Activated CD8-positive, alpha-beta memory T cell treated with anti-CD3 and anti-CD28 coated beads, Interleukin-2, amount 10 ng/mL, durations not matched to agents 7 days and 5 days (primary cell): ENCODE measurements at regions of chr10 and their contacts with region 1.

Region 1: DNA sequence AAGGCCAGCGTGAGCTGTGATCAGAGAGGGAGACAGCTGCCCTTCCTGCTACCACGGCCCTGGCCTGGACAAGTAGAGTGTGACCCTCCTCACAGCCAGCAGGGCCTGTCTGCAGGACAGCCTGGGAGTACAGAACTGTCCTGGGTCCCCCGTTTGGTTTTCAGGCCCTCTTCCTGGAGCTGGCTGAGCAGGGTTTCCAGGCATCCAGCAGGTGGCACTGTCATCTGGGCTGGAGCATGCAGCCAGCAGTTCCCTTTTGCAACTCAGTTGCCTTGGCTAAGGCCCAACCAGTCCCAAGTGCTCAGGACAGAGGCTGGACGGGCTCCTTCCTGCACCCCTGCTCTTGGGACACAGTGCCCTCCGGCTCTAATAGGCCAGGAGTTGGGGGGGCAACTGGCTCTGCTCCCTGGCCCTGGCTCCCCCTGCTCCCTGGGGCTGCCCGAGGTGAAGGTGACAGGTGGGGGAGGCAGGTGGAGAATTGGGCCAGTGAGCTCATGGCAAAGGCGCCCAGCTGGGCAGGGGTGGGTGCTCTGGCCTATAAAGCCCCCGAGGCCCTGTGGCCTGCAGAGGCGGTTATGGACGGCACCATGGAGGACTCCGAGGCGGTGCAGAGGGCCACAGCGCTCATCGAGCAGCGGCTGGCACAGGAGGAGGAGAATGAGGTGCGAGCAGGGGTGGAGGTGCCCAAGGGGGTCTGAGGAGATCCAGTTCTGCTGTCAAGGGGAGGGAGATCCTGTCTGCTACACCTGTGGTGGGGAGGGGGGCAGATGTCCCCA is at the start of gene ANKRD2:
- DNase-seq: peak; percentile 80
- ATAC-seq: peak; percentile 90
- H3K4me3 Mint-ChIP-seq: no peak within 1 kb of the TSS
- H3K27ac Mint-ChIP-seq: no peak within 1 kb of the TSS
- H3K4me1 Mint-ChIP-seq: peaks cover 2% of the 10 kb centered on the region
- H3K27me3 Mint-ChIP-seq: peaks cover 3% of the 10 kb centered on the region
- total RNA-seq, gene ANKRD2: 0.26 to 0.67 TPM

Region 2: DNA sequence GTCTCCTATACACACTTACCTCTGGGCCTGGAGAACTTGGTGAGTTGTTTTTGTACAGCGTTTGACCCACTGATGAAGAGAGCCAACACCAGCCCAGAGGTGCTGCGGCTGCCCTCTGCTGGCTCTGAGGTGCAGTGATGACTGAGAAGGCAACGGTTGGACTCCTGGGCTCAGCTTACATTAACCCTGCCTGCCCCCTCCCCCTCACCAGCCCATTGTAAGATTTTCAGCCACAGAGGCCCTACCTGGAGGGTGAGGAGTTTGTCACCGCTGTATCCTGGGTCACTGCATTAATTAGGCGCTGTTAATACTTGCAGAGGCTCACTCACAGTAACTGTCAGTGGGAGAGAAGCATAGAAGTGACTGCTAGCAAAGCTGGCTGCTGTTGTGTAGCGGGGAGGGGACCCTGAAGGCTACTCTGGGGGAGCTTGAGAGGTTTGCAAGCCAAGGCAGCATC is 18.8 kb before region 1 on chr10:
- CTCF ChIA-PET with region 1: interaction called, 11 read pairs
- DNase-seq: peak; percentile 66
- ATAC-seq: peak; percentile 98
- H3K4me3 Mint-ChIP-seq: no peak overlapping the region
- H3K27ac Mint-ChIP-seq: no peak overlapping the region
- H3K4me1 Mint-ChIP-seq: peaks cover 1% of the 10 kb centered on the region
- H3K27me3 Mint-ChIP-seq: peaks cover 3% of the 10 kb centered on the region

Region 3: DNA sequence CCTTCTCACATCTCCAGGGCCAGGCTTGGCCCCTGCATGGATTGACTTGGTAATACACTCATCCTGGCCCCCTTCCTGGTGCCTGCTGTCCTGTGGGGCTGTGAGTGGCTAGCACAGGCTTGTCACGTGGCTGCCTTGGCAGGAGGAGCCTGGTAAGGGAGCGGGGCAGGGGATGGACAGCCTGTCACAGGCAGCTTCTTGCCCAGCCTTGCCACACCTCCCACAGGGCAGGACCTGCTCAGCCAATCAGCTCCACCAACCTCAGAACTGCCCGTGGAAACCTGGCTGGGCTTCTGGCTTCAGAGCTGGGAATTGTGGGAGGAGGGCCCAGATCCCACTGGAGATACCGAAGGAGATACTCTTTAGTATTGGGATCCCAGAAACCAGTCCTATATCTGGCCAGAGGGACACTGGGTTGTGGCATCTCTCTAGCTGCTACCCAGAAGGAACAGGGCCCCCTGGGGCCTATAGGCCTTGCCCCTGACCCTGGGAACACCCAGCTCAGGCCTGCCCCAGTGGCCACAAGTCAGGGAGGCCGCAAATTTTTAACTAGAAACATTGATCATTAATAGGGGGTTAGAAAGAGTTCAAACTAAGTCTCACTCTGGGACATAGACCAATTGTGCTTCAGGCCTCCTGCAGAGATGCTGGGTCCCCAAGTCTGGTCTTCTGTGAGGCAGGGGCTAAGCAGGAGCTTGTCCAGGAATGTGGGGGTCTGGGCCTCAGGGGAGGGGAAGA is 11.8 kb after region 1 on chr10 and contains the start of gene HOGA1:
- CTCF ChIA-PET with region 1: interaction called, 21 read pairs
- DNase-seq: no peak
- ATAC-seq: no peak
- H3K4me3 Mint-ChIP-seq: no peak within 1 kb of the TSS
- H3K27ac Mint-ChIP-seq: no peak within 1 kb of the TSS
- H3K4me1 Mint-ChIP-seq: peaks cover 4% of the 10 kb centered on the region
- H3K27me3 Mint-ChIP-seq: peaks cover 6% of the 10 kb centered on the region
- total RNA-seq, gene HOGA1: not detected

Region 4: DNA sequence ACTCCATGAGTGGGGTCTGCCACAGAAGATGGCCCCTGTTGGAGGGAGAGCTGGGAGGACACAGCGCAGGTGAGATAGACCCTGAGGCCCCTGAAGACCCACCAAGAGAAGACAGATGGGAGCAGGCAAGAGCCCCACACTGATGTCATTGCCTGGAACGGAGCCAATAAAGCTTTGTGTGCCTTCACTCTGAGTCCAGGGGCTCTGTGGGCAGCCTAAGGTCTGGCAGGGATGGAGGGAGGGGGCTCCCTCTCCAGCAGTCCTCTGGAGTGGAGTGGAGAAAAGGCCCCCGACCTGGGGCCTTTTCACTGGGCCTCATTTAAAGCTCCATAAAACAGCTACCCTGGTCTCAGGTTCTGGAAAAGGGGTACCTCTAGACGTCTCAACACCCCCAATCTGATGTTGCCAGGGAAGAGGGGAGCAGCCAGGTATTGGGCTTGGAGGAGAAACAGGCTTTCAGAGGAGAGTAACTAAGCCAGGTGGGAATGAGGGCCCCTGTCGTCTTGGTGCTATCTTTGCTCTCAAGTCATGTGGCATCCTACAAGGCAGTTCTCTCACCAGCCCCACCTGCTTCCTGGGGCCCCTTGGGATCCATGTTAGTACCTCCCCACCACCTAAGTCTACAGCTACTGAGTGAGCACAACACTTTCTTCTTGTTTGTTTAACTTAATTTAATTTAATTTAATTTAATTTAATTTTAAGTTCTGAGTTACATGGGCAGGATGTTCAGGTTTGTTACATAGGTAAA is 18.5 kb after region 1 on chr10:
- CTCF ChIA-PET with region 1: interaction called, 14 read pairs
- DNase-seq: no peak
- ATAC-seq: peak; percentile 27
- H3K4me3 Mint-ChIP-seq: peak overlapping the region; percentile 47
- H3K27ac Mint-ChIP-seq: peak overlapping the region; percentile 72
- H3K4me1 Mint-ChIP-seq: peaks cover 23% of the 10 kb centered on the region
- H3K27me3 Mint-ChIP-seq: peaks cover 3% of the 10 kb centered on the region

Region 5: DNA sequence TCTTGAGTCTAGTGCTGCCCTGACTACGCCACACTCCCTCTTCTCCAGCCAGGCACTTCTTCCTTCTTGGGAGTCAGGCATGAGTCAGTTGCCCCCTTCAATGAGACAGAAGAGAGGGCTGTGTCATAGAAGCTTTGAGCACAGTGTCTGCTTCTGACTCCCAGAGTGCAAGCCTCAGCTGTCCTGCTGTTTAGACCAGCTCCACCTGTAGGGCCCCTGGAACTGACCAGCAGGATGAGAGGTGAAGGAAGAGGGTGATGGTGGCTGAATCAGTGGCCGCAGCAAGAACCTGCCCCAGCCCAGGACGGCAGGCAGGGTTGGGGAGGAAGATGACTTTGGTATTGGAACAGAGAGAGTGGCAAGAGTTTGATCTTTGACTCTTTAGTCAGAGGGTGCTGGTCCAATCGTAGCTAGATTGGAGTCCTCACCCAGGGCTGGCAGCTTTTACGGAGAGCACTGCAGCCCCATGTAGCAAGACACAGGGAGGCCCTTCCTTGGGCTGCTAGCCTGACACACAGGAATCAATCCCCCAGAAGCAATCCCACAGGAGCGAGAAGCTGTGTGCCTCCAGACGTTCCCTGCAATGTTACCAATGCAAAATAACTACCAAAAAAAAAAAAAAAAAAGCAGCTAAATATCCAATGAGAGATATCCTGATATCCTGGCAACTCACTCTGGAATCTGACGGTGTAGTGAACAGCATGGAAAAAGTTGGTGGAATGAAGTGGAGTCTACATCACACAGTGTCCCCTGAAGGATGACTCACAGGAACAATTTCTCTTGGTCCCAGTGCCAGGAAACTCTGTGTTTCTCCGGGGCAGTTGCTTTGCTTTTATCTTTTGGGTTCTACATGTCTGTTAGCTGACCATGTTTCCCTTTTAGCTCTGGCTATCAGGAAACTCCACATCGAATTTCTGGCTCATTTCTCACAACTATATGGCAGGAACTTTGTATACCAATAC is 24.0 kb after region 1 on chr10:
- CTCF ChIA-PET with region 1: interaction called, 10 read pairs
- DNase-seq: no peak
- ATAC-seq: no peak
- H3K4me3 Mint-ChIP-seq: no peak overlapping the region
- H3K27ac Mint-ChIP-seq: no peak overlapping the region
- H3K4me1 Mint-ChIP-seq: peaks cover 2% of the 10 kb centered on the region
- H3K27me3 Mint-ChIP-seq: no peaks in the 10 kb centered on the region

Region 6: DNA sequence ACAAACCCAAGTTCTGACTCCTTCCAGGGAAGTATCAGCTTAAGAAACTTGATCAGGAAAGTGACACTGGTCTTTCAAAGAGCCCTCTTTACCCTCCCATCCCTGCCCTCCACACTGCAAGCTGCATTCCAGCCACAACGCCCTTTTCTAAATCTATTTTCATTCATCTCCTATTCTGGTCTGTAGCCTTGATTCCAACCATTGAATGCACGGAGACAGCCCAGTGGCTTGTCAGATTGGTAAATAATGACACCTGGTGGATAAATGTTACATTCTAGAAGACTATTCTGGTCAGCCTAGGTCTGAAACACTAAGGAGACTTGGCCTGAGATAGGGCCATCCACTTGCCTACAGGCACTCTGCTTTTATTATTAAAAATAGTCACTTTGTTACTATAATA is 40.0 kb after region 1 on chr10:
- CTCF ChIA-PET with region 1: interaction called, 55 read pairs
- DNase-seq: no peak
- ATAC-seq: peak; percentile 55
- H3K4me3 Mint-ChIP-seq: no peak overlapping the region
- H3K27ac Mint-ChIP-seq: no peak overlapping the region
- H3K4me1 Mint-ChIP-seq: no peaks in the 10 kb centered on the region
- H3K27me3 Mint-ChIP-seq: no peaks in the 10 kb centered on the region

Region 7: GRCh38 chr10:97736902-97737769 is 164.7 kb after region 1 on chr10 and contains the start of gene ZFYVE27:
- CTCF ChIA-PET with region 1: interaction called, 11 read pairs
- DNase-seq: peak; percentile 97
- ATAC-seq: peak; percentile 89
- H3K4me3 Mint-ChIP-seq: peak within 1 kb of the TSS; percentile 86
- H3K27ac Mint-ChIP-seq: peak within 1 kb of the TSS; percentile 89
- H3K4me1 Mint-ChIP-seq: peaks cover 36% of the 10 kb centered on the region
- H3K27me3 Mint-ChIP-seq: peaks cover 4% of the 10 kb centered on the region
- total RNA-seq, gene ZFYVE27: 31.4 to 32.8 TPM